PC-9 (cell line): ENCODE measurements at regions of chr3 and their contacts with region 1.

Region 1: DNA sequence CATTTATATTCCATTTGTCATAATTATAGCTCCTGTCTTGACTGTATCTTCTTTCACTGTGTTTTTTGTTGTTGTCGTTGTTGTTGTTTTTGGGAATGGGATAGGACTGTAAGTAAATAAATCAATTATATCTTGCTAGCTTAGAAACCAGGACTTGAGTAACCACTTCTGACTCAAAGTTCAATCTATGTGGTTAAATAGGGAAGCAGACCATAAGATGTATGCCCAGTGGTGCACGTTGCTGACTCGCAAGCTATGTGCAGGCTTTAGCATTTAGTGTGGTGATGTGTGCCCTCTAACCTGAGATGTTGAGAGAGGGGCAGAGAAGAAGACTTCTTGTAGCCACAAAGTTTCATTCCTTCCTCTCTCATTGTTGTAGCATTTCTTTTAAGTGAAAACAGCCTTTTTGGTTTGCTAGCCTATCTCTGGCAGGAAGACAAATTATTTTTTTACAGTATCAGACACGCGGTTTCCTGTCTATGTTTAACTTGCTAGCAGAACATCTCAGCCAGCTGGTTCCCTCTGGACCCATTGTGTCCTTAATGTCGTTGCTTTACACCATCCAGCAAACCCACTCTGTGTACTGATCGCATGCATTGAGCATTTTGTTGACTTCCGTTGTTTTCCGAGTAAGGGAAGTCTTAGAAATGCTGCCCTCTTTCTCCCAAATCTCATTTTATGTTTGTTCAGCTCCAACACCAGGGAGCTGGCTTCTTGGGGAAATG is 52.1 kb downstream of the TGFBR2 start:
- DNase-seq: peak; percentile 9 to 69
- H3K4me3 ChIP-seq: no peak overlapping the region
- H3K27ac ChIP-seq: peak overlapping the region; percentile 49
- H3K4me1 ChIP-seq: peaks cover 26% of the 10 kb centered on the region
- H3K27me3 ChIP-seq: no peaks in the 10 kb centered on the region
- CTCF ChIP-seq: no peak

Region 2: GRCh38 chr3:30597131-30597768 is 61.2 kb before region 1 on chr3:
- CTCF ChIA-PET with region 1: no interaction called
- POLR2A ChIA-PET with region 1: interaction called, 13 read pairs
- intact Hi-C with region 1: loop called (anchors 1 kb)
- DNase-seq: peak; percentile 47 to 94
- H3K4me3 ChIP-seq: no peak overlapping the region
- H3K27ac ChIP-seq: peak overlapping the region; percentile 80
- H3K4me1 ChIP-seq: peaks cover 23% of the 10 kb centered on the region
- H3K27me3 ChIP-seq: no peaks in the 10 kb centered on the region
- CTCF ChIP-seq: no peak

Region 3: DNA sequence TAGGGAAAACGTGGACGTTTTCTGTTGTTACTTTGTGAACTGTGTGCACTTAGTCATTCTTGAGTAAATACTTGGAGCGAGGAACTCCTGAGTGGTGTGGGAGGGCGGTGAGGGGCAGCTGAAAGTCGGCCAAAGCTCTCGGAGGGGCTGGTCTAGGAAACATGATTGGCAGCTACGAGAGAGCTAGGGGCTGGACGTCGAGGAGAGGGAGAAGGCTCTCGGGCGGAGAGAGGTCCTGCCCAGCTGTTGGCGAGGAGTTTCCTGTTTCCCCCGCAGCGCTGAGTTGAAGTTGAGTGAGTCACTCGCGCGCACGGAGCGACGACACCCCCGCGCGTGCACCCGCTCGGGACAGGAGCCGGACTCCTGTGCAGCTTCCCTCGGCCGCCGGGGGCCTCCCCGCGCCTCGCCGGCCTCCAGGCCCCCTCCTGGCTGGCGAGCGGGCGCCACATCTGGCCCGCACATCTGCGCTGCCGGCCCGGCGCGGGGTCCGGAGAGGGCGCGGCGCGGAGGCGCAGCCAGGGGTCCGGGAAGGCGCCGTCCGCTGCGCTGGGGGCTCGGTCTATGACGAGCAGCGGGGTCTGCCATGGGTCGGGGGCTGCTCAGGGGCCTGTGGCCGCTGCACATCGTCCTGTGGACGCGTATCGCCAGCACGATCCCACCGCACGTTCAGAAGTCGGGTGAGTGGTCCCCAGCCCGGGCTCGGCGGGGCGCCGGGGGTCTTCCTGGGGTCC is 52.0 kb before region 1 on chr3 and contains the start of gene TGFBR2:
- CTCF ChIA-PET with region 1: no interaction called
- POLR2A ChIA-PET with region 1: no interaction called
- intact Hi-C with region 1: loop called (anchors 2 kb)
- DNase-seq: peak; percentile 85 to 92
- H3K4me3 ChIP-seq: peak within 1 kb of the TSS; percentile 80
- H3K27ac ChIP-seq: peak within 1 kb of the TSS; percentile 67
- H3K4me1 ChIP-seq: peaks cover 24% of the 10 kb centered on the region
- H3K27me3 ChIP-seq: no peaks in the 10 kb centered on the region
- CTCF ChIP-seq: no peak
- total RNA-seq, gene TGFBR2: 26.4 and 33.6 TPM in 2 replicates

Region 4: GRCh38 chr3:30613133-30613825 is 45.2 kb before region 1 on chr3:
- CTCF ChIA-PET with region 1: interaction called, 9 read pairs
- POLR2A ChIA-PET with region 1: interaction called, 11 read pairs
- intact Hi-C with region 1: no loop called
- DNase-seq: no peak
- H3K4me3 ChIP-seq: no peak overlapping the region
- H3K27ac ChIP-seq: no peak overlapping the region
- H3K4me1 ChIP-seq: peaks cover 21% of the 10 kb centered on the region
- H3K27me3 ChIP-seq: no peaks in the 10 kb centered on the region
- CTCF ChIP-seq: no peak

Region 5: GRCh38 chr3:30625541-30626435 is 32.7 kb before region 1 on chr3:
- CTCF ChIA-PET with region 1: interaction called, 3 read pairs
- POLR2A ChIA-PET with region 1: no interaction called
- intact Hi-C with region 1: loop called (anchors 1 kb)
- DNase-seq: peak; percentile 43 to 87
- H3K4me3 ChIP-seq: no peak overlapping the region
- H3K27ac ChIP-seq: peak overlapping the region; percentile 77
- H3K4me1 ChIP-seq: peaks cover 27% of the 10 kb centered on the region
- H3K27me3 ChIP-seq: no peaks in the 10 kb centered on the region
- CTCF ChIP-seq: no peak

Region 6: GRCh38 chr3:30702038-30702827 is 43.7 kb after region 1 on chr3:
- CTCF ChIA-PET with region 1: no interaction called
- POLR2A ChIA-PET with region 1: no interaction called
- intact Hi-C with region 1: no loop called
- DNase-seq: no peak
- H3K4me3 ChIP-seq: no peak overlapping the region
- H3K27ac ChIP-seq: no peak overlapping the region
- H3K4me1 ChIP-seq: no peaks in the 10 kb centered on the region
- H3K27me3 ChIP-seq: no peaks in the 10 kb centered on the region
- CTCF ChIP-seq: no peak

Region 7: DNA sequence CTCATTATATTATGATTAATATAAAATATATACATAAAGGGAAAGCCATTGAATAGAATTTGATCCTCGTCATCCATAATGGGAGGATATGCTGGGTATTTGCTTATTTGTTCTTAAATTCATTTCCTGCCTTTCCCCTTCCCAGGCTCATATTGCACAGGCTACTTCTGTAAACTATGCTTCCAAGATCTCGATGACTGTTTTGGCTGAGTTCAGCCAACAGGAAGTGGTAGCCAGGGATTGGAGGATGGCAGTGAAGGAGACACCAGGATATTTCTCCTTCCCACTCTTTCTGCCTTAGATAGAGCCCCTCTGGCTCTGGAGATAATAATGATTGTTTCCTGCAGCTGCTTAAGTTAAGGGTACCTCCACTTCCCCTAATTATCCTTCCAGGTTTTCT is 1956.5 kb after region 1 on chr3:
- CTCF ChIA-PET with region 1: no interaction called
- POLR2A ChIA-PET with region 1: interaction called, 21 read pairs
- intact Hi-C with region 1: no loop called
- DNase-seq: no peak
- H3K4me3 ChIP-seq: no peak overlapping the region
- H3K27ac ChIP-seq: no peak overlapping the region
- H3K4me1 ChIP-seq: peaks cover 7% of the 10 kb centered on the region
- H3K27me3 ChIP-seq: no peaks in the 10 kb centered on the region
- CTCF ChIP-seq: no peak